ENCODE measurements at regions of chr17 and their contacts with region 1.

Region 1: GRCh38 chr17:17919169-17920107 is 52.8 kb downstream of the TOM1L2 start:
- DNase-seq: peak; percentile 79
- CTCF ChIP-seq: peak; percentile 85

Region 2: GRCh38 chr17:17812211-17813057 is 107.0 kb before region 1 on chr17:
- CTCF ChIA-PET with region 1: interaction called, 18 read pairs
- POLR2A ChIA-PET with region 1: no interaction called
- DNase-seq: peak; percentile 88
- CTCF ChIP-seq: peak; percentile 99

Region 3: GRCh38 chr17:17890773-17891759 is 28.4 kb before region 1 on chr17:
- CTCF ChIA-PET with region 1: interaction called, 48 read pairs
- POLR2A ChIA-PET with region 1: no interaction called
- DNase-seq: peak; percentile 82
- CTCF ChIP-seq: peak; percentile 85

Region 4: GRCh38 chr17:17935321-17936271 is 16.2 kb after region 1 on chr17:
- CTCF ChIA-PET with region 1: interaction called, 17 read pairs
- POLR2A ChIA-PET with region 1: no interaction called
- DNase-seq: no peak
- CTCF ChIP-seq: no peak

Region 5: DNA sequence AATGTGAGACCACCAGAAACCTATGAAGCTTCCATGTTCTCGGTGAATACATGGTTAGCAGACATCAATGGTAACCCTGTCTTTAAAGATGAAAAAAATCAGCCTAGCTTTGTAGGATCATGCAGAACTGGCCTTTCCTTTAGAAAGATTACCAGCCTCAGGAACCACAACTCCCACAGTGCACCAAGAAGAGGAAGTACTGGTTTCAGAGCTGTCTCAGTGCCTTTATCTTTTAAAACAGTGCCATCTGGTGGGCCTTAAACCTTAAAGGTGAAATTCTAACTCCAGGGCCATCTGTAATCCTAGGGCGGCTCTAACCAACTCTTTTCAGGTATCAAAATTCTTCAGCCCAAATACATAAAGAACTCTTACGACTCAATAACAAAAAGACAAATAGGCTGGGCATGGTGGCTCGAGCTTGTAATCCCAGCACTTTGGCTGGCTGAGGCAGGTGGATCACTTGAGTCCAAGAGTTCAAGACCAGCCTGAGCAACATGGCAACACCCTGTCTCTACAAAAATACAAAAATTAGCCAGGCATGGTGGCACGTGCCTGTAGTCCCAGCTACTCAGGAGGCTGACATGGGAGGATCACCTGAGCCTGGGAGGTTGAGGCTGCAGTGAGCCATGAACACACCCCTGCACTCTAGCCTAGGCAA is 114.1 kb after region 1 on chr17:
- CTCF ChIA-PET with region 1: interaction called, 13 read pairs
- POLR2A ChIA-PET with region 1: no interaction called
- DNase-seq: peak; percentile 80
- CTCF ChIP-seq: peak; percentile 63

Measured in GM10248 (cell line).